ENCODE measurements at regions of chr11 and their contacts with region 1.

Region 1: DNA sequence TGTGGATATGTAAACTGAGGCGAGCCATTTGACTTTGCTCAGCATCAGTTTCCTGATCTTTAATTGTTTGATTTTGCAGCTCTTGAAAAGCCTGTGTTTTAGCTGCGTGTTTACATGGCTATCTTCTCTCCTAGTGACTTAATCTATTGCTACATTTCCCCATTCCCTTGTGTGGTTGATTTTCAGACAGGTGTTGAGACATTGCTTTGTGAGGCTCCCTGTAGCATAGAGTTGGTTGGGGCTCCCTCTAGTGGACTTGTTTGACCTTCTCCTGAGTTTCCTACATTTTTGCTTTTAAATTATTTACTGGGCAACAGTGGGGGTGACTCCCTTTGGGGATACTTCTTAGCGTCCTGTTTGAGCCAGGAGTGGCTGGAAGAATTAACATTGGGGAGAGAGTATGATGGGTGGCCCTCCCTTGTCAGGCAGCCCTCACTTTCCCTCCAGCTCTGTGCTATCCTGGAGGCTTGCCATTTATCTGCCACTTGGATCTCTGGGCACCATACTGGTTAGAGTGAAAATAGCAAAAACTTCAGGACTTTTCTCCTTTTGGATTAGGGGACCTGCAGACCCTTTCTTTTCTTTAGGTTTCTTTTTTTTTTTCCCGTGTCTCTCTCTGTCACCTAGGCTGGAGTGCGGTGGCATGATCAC is 9.2 kb upstream of the CBL start:
- DNase-seq: peak; percentile 68
- ATAC-seq: peak; percentile 73
- H3K4me3 Mint-ChIP-seq: no peak overlapping the region
- H3K27ac Mint-ChIP-seq: no peak overlapping the region
- H3K4me1 Mint-ChIP-seq: peaks cover 28% of the 10 kb centered on the region
- H3K27me3 Mint-ChIP-seq: no peaks in the 10 kb centered on the region; the same call in 1 of the 2 replicates
- CTCF ChIP-seq: peak; percentile 54

Region 2: GRCh38 chr11:119101759-119102423 is 95.1 kb before region 1 on chr11 and contains the start of gene DPAGT1:
- CTCF ChIA-PET with region 1: interaction called, 14 read pairs
- POLR2A ChIA-PET with region 1: no interaction called
- DNase-seq: peak; percentile 88
- ATAC-seq: peak; percentile 83
- H3K4me3 Mint-ChIP-seq: peak within 1 kb of the TSS; percentile 92
- H3K27ac Mint-ChIP-seq: peak within 1 kb of the TSS; percentile 100
- H3K4me1 Mint-ChIP-seq: peaks cover 33% of the 10 kb centered on the region
- H3K27me3 Mint-ChIP-seq: no peaks in the 10 kb centered on the region; the same call in 1 of the 2 replicates
- CTCF ChIP-seq: no peak
- total RNA-seq, gene DPAGT1: 59.6 to 64.6 TPM (median 63.5 TPM) in 3 replicates

Region 3: DNA sequence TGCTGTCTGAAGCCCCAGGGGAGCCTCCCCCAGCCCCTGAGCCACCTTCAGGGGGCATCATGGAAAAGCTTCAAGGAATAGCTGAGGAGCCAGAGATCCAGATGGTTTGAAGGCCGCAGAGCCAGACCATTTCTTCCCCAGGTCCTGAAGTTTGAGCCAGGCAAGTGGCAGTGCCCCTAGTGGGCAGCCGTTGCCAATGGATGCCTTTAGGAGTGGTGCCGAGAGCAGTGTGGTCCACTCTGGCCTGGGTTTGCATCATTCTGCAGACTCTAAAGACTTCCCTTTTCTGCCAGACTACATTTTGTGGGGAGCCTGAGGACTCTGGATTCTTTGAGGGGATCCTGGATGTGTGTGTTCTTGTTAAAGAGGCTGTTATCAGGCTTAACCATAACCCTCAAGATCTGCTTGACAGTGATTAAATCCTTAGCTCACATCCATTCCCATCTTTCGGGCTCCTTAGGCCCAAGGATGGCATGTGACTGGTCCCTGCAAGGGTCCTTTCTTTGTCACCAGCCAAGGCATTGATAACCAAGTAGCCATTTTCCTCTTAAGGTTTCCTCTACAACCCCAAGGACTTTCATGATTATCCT is 62.5 kb before region 1 on chr11:
- CTCF ChIA-PET with region 1: interaction called, 12 read pairs
- POLR2A ChIA-PET with region 1: no interaction called
- DNase-seq: peak; percentile 46
- ATAC-seq: peak; percentile 89
- H3K4me3 Mint-ChIP-seq: no peak overlapping the region
- H3K27ac Mint-ChIP-seq: no peak overlapping the region
- H3K4me1 Mint-ChIP-seq: no peaks in the 10 kb centered on the region
- H3K27me3 Mint-ChIP-seq: peaks cover 4% of the 10 kb centered on the region; the same call in 1 of the 2 replicates
- CTCF ChIP-seq: no peak; the same call in 1 of the 2 replicates

Region 4: DNA sequence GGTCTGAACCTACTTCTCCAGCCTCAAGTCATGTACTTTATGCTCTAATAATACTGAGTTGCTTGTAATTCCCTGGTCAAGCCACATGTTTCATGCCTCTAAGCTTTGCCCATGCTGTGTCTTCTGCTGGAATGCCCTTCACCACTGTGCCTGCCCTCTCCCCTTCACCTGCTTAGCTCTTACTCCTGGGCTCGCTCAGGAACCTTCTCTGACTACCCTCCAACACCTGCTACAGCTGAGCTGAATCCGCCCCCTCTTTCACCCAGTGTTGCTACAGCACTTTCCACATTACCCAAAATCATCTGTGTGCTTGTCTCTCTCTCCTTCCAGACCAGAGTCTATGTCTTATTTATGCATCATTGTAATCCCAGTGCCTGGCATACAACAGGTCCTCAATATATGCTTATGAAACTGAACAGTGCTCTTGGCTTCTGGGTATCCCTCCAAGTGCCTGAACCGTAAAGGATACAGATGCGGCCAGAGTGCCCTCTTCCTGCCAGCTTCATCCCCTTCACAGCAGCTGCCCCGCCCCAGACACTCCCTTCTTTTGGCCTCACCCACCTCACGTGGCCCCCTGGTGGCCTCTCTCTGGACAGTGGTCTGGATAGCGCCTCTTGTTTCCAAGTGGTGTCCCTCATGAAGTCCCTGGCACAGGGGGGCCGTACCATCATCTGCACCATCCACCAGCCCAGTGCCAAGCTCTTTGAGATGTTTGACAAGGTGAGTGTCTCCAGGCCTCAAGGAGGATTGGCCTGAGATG is 41.0 kb before region 1 on chr11:
- CTCF ChIA-PET with region 1: interaction called, 38 read pairs
- POLR2A ChIA-PET with region 1: no interaction called
- DNase-seq: peak; percentile 52
- ATAC-seq: peak; percentile 59
- H3K4me3 Mint-ChIP-seq: no peak overlapping the region
- H3K27ac Mint-ChIP-seq: no peak overlapping the region
- H3K4me1 Mint-ChIP-seq: peaks cover 12% of the 10 kb centered on the region
- H3K27me3 Mint-ChIP-seq: peaks cover 16% of the 10 kb centered on the region
- CTCF ChIP-seq: peak; percentile 41; the same call in 1 of the 2 replicates

Region 5: GRCh38 chr11:119168471-119169281 is 28.3 kb before region 1 on chr11 and contains the start of gene NLRX1:
- CTCF ChIA-PET with region 1: interaction called, 18 read pairs
- POLR2A ChIA-PET with region 1: no interaction called
- DNase-seq: peak; percentile 83
- ATAC-seq: peak; percentile 72
- H3K4me3 Mint-ChIP-seq: peak within 1 kb of the TSS; percentile 83
- H3K27ac Mint-ChIP-seq: peak within 1 kb of the TSS; percentile 95
- H3K4me1 Mint-ChIP-seq: peaks cover 26% of the 10 kb centered on the region
- H3K27me3 Mint-ChIP-seq: no peaks in the 10 kb centered on the region
- CTCF ChIP-seq: peak; percentile 43; the same call in 1 of the 2 replicates
- total RNA-seq, gene NLRX1: 19.9 to 23.2 TPM (median 20.8 TPM) in 3 replicates

Region 6: GRCh38 chr11:119491753-119492510 is 295.0 kb after region 1 on chr11:
- CTCF ChIA-PET with region 1: no interaction called
- POLR2A ChIA-PET with region 1: no interaction called
- DNase-seq: no peak
- ATAC-seq: peak; percentile 20
- H3K4me3 Mint-ChIP-seq: no peak overlapping the region
- H3K27ac Mint-ChIP-seq: no peak overlapping the region
- H3K4me1 Mint-ChIP-seq: peaks cover 23% of the 10 kb centered on the region
- H3K27me3 Mint-ChIP-seq: no peaks in the 10 kb centered on the region
- CTCF ChIP-seq: no peak